Endothelial cell of umbilical vein (primary cell): ENCODE measurements at regions of chr7 and their contacts with region 1.

Region 1: DNA sequence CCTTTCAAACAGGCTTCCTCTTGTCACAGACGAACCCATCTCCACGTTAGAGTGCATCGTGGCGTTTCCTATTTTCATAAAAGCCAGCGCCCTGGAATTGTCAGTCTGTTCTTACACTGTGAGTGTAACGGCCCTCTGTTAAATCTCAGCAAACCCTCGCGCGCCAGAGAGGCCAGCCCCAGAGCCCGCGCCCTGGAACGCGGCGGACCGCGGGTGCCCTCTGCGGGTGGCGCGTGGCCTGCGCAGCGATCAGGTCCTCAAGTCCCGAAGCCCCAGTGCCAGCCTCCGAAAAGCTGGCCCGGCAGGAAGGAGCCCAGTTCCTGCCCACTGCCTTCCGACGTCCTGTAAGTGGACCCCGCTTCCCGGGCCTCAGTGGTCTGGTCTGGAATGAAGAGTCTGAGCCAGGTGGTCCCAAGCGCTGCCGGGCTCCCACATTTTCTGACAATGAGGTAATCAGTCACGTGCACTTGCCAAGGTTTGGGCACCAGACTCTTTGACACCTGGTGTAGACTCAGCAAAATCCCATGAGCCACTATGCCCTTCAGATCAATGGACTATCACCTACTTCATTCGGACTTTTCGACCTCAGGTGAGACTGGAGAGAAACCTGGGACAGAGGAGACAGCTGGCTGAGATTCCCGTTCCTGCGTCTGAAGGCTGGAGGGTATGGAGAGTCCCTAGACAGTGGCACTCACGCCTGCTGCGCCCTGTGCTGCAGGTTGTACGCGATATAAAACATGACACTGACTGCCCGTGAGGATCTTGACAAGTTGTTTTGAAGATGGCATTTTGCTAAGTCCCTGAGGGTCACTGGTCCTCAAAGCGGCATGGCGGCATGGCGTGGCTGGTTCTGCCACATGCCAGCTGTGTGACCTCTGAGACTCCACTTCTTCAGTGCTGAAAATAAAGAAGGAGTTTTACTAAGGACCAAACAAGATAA is 109.4 kb upstream of the LANCL2 start:
- DNase-seq: peak; percentile 76
- H3K4me3 ChIP-seq: peak overlapping the region; percentile 23 to 75 (median 39)
- H3K27ac ChIP-seq: no peak overlapping the region
- H3K4me1 ChIP-seq: peaks cover 9% of the 10 kb centered on the region
- H3K27me3 ChIP-seq: peaks cover 44 to 53% of the 10 kb centered on the region in 2 experiments
- CTCF ChIP-seq: peak; percentile 92 to 97
- POLR2A ChIP-seq: no peak

Region 2: GRCh38 chr7:54773472-54774399 is 482.0 kb before region 1 on chr7:
- CTCF ChIA-PET with region 1: interaction called, 385 read pairs
- POLR2A ChIA-PET with region 1: no interaction called
- dilution Hi-C with region 1: loop called (anchors 10 kb)
- intact Hi-C with region 1: loop called (anchors 1 kb)
- DNase-seq: peak; percentile 86
- H3K4me3 ChIP-seq: peak overlapping the region; percentile 13 to 51 (median 20)
- H3K27ac ChIP-seq: no peak overlapping the region
- H3K4me1 ChIP-seq: peaks cover 8% of the 10 kb centered on the region
- H3K27me3 ChIP-seq: peaks cover 0 to 2% of the 10 kb centered on the region in 2 experiments
- CTCF ChIP-seq: peak; percentile 77 to 85
- POLR2A ChIP-seq: no peak

Region 3: DNA sequence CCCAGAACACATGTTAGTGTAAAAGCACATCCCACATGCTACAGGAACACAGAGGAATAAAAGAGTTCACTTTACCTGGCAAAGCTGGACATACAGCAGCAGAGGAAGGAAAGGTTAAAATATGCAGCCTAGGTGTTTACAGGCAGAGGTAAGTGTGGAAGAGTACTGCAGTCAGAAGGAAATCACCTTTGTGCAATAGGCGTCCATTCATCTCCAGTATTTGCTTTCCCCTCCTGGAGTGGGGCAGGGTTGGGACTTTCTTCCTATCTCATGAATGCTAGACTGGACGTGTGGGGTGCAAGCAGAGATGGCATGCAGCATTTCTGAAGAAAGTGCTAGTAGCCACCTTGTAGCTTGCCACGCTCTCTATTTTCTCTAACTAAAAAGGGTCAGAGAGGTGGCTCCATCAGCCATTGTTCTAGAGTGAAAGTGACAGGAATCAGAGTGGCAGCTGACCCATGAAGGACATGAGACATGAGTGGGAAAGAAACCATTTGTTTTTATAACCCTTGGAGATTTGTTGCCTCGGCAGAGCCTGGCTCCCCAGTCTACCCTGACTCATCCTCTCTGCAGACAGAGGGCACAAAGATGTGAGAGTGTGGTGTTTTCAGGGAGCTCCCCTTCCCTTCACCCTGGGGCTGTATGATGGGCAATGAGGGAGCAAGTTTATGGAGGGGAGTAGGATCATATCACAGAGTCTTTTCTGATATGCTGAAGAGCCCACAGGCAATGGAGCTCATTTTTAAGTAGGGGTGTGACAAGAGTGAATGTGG is 395.6 kb before region 1 on chr7:
- CTCF ChIA-PET with region 1: interaction called, 10 read pairs
- POLR2A ChIA-PET with region 1: no interaction called
- dilution Hi-C with region 1: no loop called
- intact Hi-C with region 1: no loop called
- DNase-seq: no peak
- H3K4me3 ChIP-seq: no peak overlapping the region
- H3K27ac ChIP-seq: no peak overlapping the region
- H3K4me1 ChIP-seq: no peaks in the 10 kb centered on the region
- H3K27me3 ChIP-seq: peaks cover 12 to 24% of the 10 kb centered on the region in 2 experiments
- CTCF ChIP-seq: no peak
- POLR2A ChIP-seq: no peak

Region 4: DNA sequence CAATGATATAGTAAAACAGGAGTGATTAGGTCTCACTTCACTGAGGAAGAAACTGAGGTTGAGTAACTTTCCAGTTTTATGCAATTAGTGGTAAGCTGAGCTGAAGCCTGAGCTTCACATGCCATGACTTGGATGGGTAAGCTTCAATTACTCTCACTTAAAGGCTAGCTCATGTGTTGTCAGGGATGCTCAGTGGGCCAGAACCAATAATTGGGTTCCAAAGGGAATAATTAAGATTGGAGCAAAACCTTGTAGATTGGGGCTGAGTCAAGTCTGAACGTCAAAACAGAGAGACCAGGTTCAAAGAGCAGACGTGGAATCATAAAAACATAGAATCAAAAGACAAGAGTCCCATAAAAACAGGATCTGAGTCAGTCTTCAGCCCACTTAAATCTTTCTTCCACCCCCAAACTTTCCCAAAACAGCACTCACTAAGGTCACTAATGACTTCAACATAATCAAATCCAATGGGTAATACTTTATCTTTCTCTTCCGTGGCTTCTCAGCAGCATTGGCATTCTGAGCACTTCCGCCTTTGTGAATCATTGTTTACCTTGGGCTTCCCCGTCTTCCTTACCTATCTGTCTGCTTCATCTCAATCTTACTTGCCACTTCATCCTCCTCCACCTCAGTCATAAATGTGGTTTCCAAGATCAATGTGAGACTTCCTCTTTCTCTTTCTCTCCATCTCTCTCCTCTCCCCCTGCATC is 260.0 kb before region 1 on chr7:
- CTCF ChIA-PET with region 1: interaction called, 9 read pairs
- POLR2A ChIA-PET with region 1: no interaction called
- dilution Hi-C with region 1: no loop called
- intact Hi-C with region 1: loop called (anchors 2 kb)
- DNase-seq: peak; percentile 80
- H3K4me3 ChIP-seq: no peak overlapping the region
- H3K27ac ChIP-seq: peak overlapping the region; percentile 15
- H3K4me1 ChIP-seq: peaks cover 20% of the 10 kb centered on the region
- H3K27me3 ChIP-seq: peaks cover 4% of the 10 kb centered on the region in 2 experiments
- CTCF ChIP-seq: no peak
- POLR2A ChIP-seq: peak; percentile 52

Region 5: GRCh38 chr7:55086413-55087201 is 169.2 kb before region 1 on chr7:
- CTCF ChIA-PET with region 1: interaction called, 31 read pairs
- POLR2A ChIA-PET with region 1: no interaction called
- dilution Hi-C with region 1: no loop called
- intact Hi-C with region 1: loop called (anchors 2 kb)
- DNase-seq: peak; percentile 64
- H3K4me3 ChIP-seq: no peak overlapping the region
- H3K27ac ChIP-seq: no peak overlapping the region
- H3K4me1 ChIP-seq: peaks cover 16% of the 10 kb centered on the region
- H3K27me3 ChIP-seq: peaks cover 44 to 58% of the 10 kb centered on the region in 2 experiments
- CTCF ChIP-seq: no peak
- POLR2A ChIP-seq: no peak

Region 6: GRCh38 chr7:55212838-55213539 is 42.8 kb before region 1 on chr7:
- CTCF ChIA-PET with region 1: interaction called, 12 read pairs
- POLR2A ChIA-PET with region 1: no interaction called
- dilution Hi-C with region 1: no loop called
- intact Hi-C with region 1: no loop called
- DNase-seq: peak; percentile 50
- H3K4me3 ChIP-seq: no peak overlapping the region
- H3K27ac ChIP-seq: no peak overlapping the region
- H3K4me1 ChIP-seq: peaks cover 8% of the 10 kb centered on the region
- H3K27me3 ChIP-seq: peaks cover 0 to 2% of the 10 kb centered on the region in 2 experiments
- CTCF ChIP-seq: peak in 1 of 2 donors; percentile 4
- POLR2A ChIP-seq: no peak